GM10248 (cell line): ENCODE measurements at regions of chr1 and their contacts with region 1.

Region 1: GRCh38 chr1:179293340-179294327 is at the start of gene SOAT1:
- DNase-seq: peak; percentile 95
- CTCF ChIP-seq: peak; percentile 23

Region 2: GRCh38 chr1:179081687-179082332 is 211.8 kb before region 1 on chr1 and contains the start of gene TOR3A:
- CTCF ChIA-PET with region 1: interaction called, 16 read pairs
- POLR2A ChIA-PET with region 1: no interaction called
- DNase-seq: peak; percentile 96
- CTCF ChIP-seq: no peak

Region 3: GRCh38 chr1:179264506-179264905 is 29.1 kb before region 1 on chr1:
- CTCF ChIA-PET with region 1: no interaction called
- POLR2A ChIA-PET with region 1: no interaction called
- DNase-seq: no peak
- CTCF ChIP-seq: no peak